BJ (cell line): ENCODE measurements at regions of chr1 and their contacts with region 1.

Region 1: DNA sequence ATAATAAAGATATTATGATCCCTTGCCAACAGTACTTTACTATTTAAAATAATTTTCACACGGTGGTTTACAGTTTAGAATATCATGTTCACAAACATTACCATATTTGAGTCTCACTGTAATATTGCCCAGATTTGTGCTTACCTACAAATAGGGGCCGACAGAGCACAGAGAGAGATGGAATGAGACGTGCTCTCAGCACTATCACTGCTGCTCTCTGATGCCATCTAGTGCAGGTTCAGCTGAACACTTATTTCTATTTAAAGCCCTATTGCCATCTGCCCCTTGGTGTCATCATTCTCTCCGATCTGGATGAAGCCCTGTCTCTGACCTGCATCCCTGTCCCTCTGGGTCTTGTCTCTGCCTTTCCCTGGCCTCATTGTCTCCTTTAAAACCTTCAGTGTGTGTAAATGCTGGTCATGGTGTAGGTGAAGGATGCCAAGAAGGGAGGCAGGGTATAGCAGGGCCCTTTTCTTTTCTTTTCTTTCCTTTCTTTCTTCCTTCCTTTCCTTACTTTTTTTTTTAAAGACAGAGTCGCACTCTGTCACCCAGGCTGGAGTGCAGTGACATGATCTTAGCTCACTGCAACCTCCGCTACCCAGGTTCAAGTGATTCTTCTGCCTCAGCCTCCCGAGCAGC is 6.9 kb upstream of the GPATCH4 start:
- DNase-seq: no peak
- H3K4me3 ChIP-seq: no peak overlapping the region
- H3K27me3 ChIP-seq: peaks cover 11% of the 10 kb centered on the region
- CTCF ChIP-seq: peak; percentile 85

Region 2: DNA sequence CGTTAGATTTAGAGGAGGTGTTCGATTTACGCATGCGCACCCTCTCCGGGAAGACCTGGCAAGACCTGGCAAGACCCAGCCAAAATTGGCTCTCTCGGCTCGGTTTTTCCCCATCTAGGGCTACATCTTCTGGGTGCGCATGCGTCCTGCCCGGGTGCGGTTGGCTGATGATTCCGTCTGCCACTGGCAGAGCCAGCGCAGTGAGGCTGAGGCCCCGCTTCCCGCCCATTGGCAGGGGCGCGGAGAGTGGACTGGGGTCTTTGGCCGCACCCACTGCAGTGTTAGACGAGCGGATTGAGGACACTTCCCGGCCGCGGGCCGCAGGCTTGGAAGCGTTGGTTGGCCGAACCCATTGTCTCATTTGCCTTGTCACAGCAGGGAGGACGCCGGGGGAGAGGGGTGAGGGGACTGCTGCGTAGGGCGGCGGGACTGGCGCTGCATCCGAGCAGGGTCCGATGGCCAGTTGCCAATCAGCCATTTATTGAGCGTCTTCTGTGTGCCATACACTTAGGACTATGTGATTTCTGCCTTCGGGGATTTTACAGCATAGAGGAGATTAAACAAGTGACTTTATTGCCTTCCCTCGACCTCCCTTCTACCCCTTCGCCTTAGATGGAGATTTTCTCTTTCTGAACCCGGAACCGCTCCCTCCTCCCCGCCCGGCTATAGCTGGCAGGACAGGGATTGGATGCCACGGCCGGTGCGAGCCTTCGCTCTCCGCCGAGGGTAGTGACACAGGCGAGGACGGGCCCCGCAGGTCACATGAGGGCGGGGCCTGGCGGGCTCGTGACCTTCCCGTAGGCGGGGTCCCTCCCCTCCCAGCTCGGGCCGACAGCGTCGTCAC is 151.3 kb before region 1 on chr1:
- CTCF ChIA-PET with region 1: interaction called, 15 read pairs
- POLR2A ChIA-PET with region 1: no interaction called
- DNase-seq: peak; percentile 89
- H3K4me3 ChIP-seq: peak overlapping the region; percentile 47
- H3K27me3 ChIP-seq: peaks cover under 1% of the 10 kb centered on the region; the same call in 1 of the 2 replicates
- CTCF ChIP-seq: no peak

Region 3: DNA sequence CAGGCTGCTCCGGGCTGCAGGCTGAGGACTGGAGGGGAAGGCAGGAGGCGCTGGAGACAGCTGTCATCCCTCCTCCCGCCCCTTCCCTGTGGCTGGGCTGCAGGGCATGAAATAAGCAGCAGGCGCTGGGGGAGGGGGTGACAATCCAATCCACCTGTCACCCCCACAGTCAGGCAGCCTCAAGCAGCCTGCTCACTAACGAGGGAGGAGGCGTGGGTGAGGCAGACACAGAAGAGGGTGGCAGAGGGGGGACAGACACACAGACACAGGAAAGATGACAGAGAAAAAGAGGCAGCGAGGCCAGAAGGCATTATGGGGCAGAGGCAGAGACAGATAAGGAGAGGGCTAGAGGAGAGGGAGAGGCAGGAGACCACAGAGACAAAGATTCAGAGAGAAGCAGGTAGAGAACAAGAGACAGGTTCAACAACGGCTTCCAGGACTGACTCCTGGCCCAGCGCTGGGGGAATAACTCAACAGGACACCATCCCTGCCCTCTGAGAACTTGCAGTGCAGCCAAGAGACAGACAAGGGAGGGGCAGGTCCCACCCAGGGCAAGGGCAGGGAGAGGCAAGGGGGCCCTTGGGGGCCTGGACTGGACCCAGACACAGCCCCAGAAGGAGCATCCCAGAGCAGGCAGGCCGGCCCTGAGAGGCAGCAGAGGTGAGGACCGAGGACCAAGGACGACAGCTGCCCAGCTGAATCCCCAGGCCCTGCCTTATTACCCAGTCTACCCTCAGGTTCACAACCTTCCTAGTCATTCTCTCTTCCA is 118.8 kb before region 1 on chr1:
- CTCF ChIA-PET with region 1: interaction called, 12 read pairs
- POLR2A ChIA-PET with region 1: no interaction called
- DNase-seq: no peak
- H3K4me3 ChIP-seq: no peak overlapping the region
- H3K27me3 ChIP-seq: no peaks in the 10 kb centered on the region
- CTCF ChIP-seq: peak; percentile 38; the same call in 1 of the 2 replicates

Region 4: DNA sequence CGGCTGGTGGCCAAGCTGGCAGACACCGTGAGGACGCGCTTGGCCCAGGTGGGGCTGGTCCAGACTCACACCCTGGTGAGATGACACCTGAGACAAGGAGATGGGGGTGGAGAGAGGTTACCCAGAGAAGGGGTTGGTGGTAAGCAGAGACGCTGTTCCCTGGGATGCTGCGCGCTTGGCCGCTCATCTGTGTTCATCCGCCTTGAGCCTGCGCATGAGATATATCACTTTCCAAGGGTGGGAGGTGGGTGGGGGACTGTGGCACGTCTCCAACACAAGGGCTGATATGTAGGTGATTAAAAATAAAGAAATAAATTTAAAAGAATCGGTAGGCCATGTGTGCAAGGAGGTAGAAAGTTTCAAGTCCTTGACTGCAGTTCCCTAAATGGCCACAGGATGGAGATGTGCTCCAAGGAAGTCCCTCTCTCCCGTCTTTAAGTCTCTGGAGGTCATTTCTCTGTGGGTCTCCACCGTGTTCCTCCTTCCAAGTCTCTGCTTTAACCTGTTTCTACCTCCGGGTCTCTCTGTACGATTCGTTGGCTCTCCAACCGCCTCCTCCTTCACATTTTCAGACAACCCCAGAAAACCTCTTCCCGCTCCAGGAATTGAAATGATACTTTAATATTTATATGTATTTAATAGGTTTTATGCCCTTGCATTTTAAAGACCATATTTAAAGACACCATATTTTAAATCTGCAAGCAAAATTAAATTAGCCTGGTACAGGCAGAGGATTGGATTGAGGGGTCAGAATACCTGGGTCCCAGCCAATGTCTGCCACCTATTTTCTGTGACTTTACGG is 24.1 kb before region 1 on chr1:
- CTCF ChIA-PET with region 1: interaction called, 14 read pairs
- POLR2A ChIA-PET with region 1: no interaction called
- DNase-seq: no peak
- H3K4me3 ChIP-seq: no peak overlapping the region
- H3K27me3 ChIP-seq: peaks cover 3% of the 10 kb centered on the region; the same call in 1 of the 2 replicates
- CTCF ChIP-seq: peak; percentile 87

Region 5: DNA sequence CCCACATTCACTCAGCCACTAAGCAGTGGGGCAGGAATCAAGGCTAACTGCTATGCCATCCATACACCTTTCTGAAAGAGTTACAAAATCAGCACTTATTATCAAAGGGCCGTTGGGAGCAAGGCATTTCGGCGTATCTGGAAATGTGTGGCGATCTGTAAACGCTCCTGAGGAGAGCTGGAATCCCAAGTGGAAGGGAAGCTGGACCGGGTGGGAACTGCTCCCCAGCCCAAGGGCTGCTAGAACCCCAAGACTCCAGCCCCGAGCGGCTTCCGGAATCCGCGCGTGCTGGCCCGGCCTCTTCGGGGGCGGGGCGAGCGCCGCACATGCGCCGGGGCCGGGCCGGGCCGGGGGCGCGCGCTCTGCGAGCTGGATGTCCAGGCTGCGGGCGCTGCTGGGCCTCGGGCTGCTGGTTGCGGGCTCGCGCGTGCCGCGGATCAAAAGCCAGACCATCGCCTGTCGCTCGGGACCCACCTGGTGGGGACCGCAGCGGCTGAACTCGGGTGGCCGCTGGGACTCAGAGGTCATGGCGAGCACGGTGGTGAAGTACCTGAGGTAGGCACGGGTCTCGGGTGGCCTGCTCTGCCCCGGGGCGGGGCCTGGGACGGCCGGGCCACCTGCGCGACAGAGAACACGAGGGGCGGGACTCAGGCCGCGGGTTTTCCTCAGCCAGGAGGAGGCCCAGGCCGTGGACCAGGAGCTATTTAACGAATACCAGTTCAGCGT is 16.6 kb before region 1 on chr1 and contains the start of gene NAXE:
- CTCF ChIA-PET with region 1: interaction called, 14 read pairs
- POLR2A ChIA-PET with region 1: no interaction called
- DNase-seq: no peak
- H3K4me3 ChIP-seq: peak within 1 kb of the TSS; percentile 54
- H3K27me3 ChIP-seq: no peaks in the 10 kb centered on the region
- CTCF ChIP-seq: no peak
- polyA plus RNA-seq, gene NAXE: 37.8 and 63.3 TPM in 2 replicates